A549 (cell line): ENCODE measurements at regions of chr1 and their contacts with region 1.

Region 1: DNA sequence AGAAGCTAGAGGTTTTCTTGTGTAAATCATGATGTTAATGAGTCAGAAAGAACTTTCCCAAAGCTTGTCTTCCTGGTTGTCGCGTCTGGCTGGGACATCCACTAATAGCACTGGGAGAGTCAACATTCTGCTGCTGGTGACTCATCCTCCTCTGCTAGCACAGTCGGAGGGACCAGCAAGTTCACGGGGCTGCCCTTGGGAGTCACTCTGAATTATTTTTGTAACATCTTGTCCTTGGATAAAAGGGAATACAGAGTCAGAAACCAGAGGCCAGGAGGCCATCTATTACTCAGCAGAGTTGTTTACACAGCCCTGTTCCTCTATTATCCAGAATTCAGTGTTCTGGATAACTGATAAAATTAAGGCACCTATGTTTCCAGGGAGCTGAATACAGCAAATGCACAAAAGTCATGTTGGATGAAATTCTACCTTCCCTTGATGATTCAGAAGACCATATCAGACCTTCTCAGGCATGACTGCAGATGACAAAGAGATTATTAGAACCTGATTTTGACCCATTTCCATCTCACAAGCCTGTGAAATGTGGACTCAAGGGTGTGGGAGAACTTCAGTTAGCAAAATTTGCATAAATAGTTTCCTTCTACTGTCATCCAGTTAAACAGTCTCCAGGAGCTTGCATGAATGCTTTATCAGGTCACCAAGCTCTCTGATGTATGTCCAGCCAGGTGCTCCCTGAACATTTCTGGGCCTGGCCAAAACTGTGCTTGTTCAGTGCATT is 68.1 kb downstream of the JAK1 start:
- DNase-seq: peak; percentile 70 to 97
- ATAC-seq: peak; percentile 92 to 94
- H3K4me3 ChIP-seq: no peak overlapping the region
- H3K27ac ChIP-seq: peak overlapping the region; percentile 89 to 90
- H3K4me1 ChIP-seq: peaks cover 88% of the 10 kb centered on the region
- CTCF ChIP-seq: no peak
- EP300 ChIP-seq: peak; percentile 62 to 72; a peak in 4 of 5 replicates
- POLR2A ChIP-seq: no peak
- RAD21 ChIP-seq: peak in 1 of 2 experiments; percentile 42; a peak in 3 of 5 replicates

Region 2: GRCh38 chr1:64539781-64540218 is 358.5 kb before region 1 on chr1:
- CTCF ChIA-PET with region 1: no interaction called
- POLR2A ChIA-PET with region 1: no interaction called
- DNase-seq: no peak
- ATAC-seq: no peak
- H3K4me3 ChIP-seq: no peak overlapping the region
- H3K27ac ChIP-seq: no peak overlapping the region
- H3K4me1 ChIP-seq: no peaks in the 10 kb centered on the region
- CTCF ChIP-seq: no peak
- EP300 ChIP-seq: no peak
- POLR2A ChIP-seq: no peak
- RAD21 ChIP-seq: no peak

Region 3: GRCh38 chr1:64912191-64912590 is 13.9 kb after region 1 on chr1:
- CTCF ChIA-PET with region 1: interaction called, 4 read pairs
- POLR2A ChIA-PET with region 1: interaction called, 15 read pairs
- DNase-seq: no peak
- ATAC-seq: no peak
- H3K4me3 ChIP-seq: no peak overlapping the region
- H3K27ac ChIP-seq: peak overlapping the region; percentile 83 to 93
- H3K4me1 ChIP-seq: peaks cover 94% of the 10 kb centered on the region
- CTCF ChIP-seq: no peak
- EP300 ChIP-seq: no peak
- POLR2A ChIP-seq: no peak
- RAD21 ChIP-seq: no peak

Region 4: GRCh38 chr1:64917328-64917861 is 19.1 kb after region 1 on chr1:
- CTCF ChIA-PET with region 1: interaction called, 4 read pairs
- POLR2A ChIA-PET with region 1: interaction called, 15 read pairs
- DNase-seq: peak; percentile 73 to 92
- ATAC-seq: peak; percentile 87 to 89
- H3K4me3 ChIP-seq: no peak overlapping the region
- H3K27ac ChIP-seq: peak overlapping the region; percentile 83 to 93
- H3K4me1 ChIP-seq: peaks cover 85% of the 10 kb centered on the region
- CTCF ChIP-seq: no peak
- EP300 ChIP-seq: peak; percentile 83 to 94; a peak in 3 of 5 replicates
- POLR2A ChIP-seq: no peak
- RAD21 ChIP-seq: peak; percentile 17 to 52; a peak in 3 of 5 replicates

Region 5: DNA sequence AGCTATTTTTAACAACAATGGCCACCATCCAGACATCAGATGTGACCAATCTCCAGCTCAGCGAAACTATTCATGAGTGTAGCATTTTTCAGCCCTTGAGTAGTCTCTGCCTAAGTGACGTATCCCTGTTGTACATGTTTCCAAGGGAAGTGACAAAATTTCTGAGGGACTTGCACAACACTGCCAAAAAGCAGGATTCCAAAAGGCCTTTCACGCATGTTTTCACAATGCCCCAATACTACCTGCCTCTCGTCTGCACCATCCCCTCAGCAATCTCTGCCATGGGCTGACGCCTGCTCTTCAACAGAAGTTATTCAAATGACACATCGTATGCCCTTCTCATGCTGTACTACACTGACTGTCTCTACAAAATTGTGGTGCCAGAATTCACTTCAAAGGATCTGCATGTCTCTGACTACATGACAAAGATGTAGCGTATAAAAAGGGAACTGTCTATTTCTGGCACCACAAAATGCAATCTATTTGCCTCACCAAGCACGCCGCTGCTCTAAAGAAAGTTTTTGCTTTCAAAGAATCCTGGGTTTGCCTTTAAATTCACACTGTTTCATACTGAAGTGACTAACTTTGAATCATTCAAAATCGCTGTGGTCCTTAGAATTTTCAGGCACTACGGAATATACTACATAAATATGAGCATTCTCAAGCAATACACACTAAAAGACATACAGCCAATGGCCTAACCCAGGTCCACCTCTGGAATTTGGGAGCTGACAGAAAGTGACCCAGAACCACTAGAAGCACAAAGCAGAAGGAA is 35.2 kb after region 1 on chr1:
- CTCF ChIA-PET with region 1: no interaction called
- POLR2A ChIA-PET with region 1: interaction called, 12 read pairs
- DNase-seq: peak in 1 of 2 experiments; percentile 60
- ATAC-seq: peak; percentile 74 to 79
- H3K4me3 ChIP-seq: 0 out of 3 replicates have a peak overlapping the region, but pooled peaks have one; percentile 22
- H3K27ac ChIP-seq: peak overlapping the region; percentile 86 to 92
- H3K4me1 ChIP-seq: peaks cover 67% of the 10 kb centered on the region
- CTCF ChIP-seq: no peak
- EP300 ChIP-seq: no peak
- POLR2A ChIP-seq: no peak
- RAD21 ChIP-seq: no peak

Region 6: DNA sequence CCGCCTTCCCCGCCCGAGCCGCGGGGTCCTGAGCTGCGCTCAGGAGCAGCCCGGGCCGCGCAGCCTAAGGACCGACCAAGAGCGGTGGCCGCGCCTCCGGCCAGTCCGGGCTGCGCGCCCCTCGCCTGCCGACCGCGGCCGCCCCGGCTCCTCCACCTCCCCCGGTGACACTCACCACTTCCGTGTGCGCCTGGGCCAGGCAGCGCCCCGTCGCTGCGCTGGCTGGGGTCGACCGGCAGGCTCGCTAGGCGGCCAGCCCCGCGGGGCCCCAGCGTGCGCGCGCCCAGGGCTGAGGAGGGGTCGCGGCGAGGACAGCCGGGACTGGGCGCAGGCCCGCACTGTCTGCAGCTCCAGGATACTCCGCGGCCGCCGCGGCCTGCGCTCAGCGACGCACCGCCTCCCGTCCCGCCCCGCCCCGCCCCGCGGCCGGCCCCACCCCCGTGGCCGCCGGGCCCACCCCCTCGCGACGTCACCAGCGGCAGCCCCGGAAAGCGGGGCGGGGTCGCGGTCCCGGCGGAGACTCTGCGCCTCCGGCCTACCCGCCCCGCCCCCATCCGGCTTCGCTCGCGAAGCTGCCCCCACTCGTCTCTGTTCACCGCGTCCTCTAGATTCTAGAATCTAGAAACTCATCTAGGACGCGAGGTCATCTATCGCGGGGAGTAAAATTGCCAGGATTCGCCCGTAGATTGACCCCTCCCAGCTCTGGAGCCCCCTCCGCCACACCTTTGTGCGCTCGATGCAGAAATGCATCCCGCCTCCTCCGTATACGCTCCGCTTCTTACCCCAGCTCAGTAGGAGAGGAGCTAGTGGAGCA is 68.1 kb after region 1 on chr1 and contains the start of gene JAK1:
- CTCF ChIA-PET with region 1: interaction called, 3 read pairs
- POLR2A ChIA-PET with region 1: interaction called, 15 read pairs
- DNase-seq: peak; percentile 71 to 76
- ATAC-seq: peak; percentile 85 to 94
- H3K4me3 ChIP-seq: peak within 1 kb of the TSS; percentile 86
- H3K27ac ChIP-seq: peak within 1 kb of the TSS; percentile 80 to 98
- H3K4me1 ChIP-seq: peaks cover 50% of the 10 kb centered on the region
- CTCF ChIP-seq: no peak
- EP300 ChIP-seq: no peak
- POLR2A ChIP-seq: peak; percentile 81
- RAD21 ChIP-seq: peak in 1 of 2 experiments; percentile 19; a peak in 1 of 5 replicates
- polyA plus RNA-seq, gene JAK1: 156 and 159 TPM in 2 replicates